ENCODE measurements at regions of chr17 and their contacts with region 1.

Region 1: GRCh38 chr17:44820631-44821212 is 9.4 kb downstream of the GJC1 start:
- DNase-seq: peak; percentile 78
- ATAC-seq: peak; percentile 91
- H3K4me3 ChIP-seq: peak overlapping the region; percentile 7 to 26; a peak in 3 of 4 replicates
- H3K27ac ChIP-seq: peak overlapping the region; percentile 90
- H3K4me1 ChIP-seq: peaks cover 28% of the 10 kb centered on the region
- H3K27me3 ChIP-seq: no peaks in the 10 kb centered on the region
- CTCF ChIP-seq: no peak

Region 2: GRCh38 chr17:44846206-44846605 is 25.5 kb after region 1 on chr17:
- CTCF ChIA-PET with region 1: no interaction called
- POLR2A ChIA-PET with region 1: interaction called, 15 read pairs
- in situ Hi-C with region 1: no loop called
- intact Hi-C with region 1: no loop called
- DNase-seq: no peak
- ATAC-seq: no peak
- H3K4me3 ChIP-seq: no peak overlapping the region
- H3K27ac ChIP-seq: no peak overlapping the region
- H3K4me1 ChIP-seq: no peaks in the 10 kb centered on the region; the same call in 1 of the 2 replicates
- H3K27me3 ChIP-seq: no peaks in the 10 kb centered on the region
- CTCF ChIP-seq: no peak